ENCODE measurements at regions of chr7 and their contacts with region 1.

Region 1: GRCh38 chr7:149005241-149006050 is 22.9 kb downstream of the PDIA4 start:
- DNase-seq: peak; percentile 57 to 95 (median 81)
- ATAC-seq: peak; percentile 92
- H3K4me3 ChIP-seq: no peak overlapping the region
- H3K27ac ChIP-seq: no peak overlapping the region
- H3K4me1 ChIP-seq: peaks cover 0 to 4% of the 10 kb centered on the region in 2 donors
- H3K27me3 ChIP-seq: no peaks in the 10 kb centered on the region
- CTCF ChIP-seq: peak; percentile 84 to 88

Region 2: DNA sequence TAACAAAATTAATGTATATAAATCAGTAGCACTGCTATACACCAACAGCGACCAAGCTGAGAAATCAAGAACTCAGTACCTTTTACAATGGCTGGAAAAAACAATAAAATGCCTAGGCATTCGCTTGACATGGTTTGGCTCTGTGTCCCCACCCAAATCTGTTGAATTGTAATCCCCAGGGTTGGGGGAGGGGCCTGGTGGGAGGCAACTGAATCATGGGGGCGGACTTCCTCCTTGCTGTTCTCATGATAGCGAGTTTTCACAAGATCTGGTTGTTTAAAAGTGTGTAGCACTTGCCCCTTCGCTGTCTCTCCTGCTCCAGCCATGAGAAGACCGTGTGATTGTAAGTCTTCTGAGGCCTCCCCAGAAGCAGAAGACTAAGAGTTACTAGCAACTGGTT is 76.5 kb after region 1 on chr7:
- intact Hi-C with region 1: loop called in 1 of 2 experiments (anchors 10 kb)
- DNase-seq: no peak
- ATAC-seq: no peak
- H3K4me3 ChIP-seq: no peak overlapping the region
- H3K27ac ChIP-seq: no peak overlapping the region
- H3K4me1 ChIP-seq: peaks cover 0 to 7% of the 10 kb centered on the region in 2 donors
- H3K27me3 ChIP-seq: no peaks in the 10 kb centered on the region
- CTCF ChIP-seq: no peak

Measured in left lung (tissue), 14 donors.